T-cell (primary cell): ENCODE measurements at regions of chr4 and their contacts with region 1.

Region 1: DNA sequence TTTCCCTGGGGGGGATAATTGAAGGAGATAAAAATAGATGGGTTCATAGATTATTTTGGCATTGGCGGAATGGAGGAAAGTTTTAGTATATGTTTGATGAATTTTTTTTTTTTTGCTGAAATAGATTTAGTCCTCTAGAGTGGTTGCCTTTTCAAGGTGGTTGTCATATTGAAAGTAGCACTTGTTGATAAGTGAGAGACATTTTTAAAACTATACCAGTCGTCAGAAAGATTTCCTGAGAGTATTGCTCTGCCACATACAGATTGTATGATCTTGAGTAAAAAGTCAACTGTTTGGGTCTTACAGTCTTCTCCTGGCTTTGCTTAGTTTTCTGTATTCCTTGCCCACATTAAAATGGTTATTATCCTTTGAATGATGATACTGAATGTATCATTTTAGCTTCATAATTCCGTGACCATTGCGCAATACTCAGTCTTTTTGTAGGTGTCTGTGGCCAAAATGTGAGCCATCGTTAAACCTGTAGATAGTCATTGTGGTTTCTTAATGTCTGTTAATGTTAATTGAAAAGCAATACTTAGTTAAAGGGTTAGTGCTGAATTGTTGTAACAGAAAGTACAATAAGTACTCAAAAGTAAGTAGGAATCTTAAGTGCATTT is 7.1 kb downstream of the SMARCAD1 start:
- DNase-seq: no peak
- ATAC-seq: peak in 1 of 4 experiments; percentile 28
- H3K4me3 ChIP-seq: no peak overlapping the region
- H3K4me3 Mint-ChIP-seq: no peak overlapping the region
- H3K27ac ChIP-seq: no peak overlapping the region
- H3K27ac Mint-ChIP-seq: no peak overlapping the region
- H3K4me1 ChIP-seq: peaks cover 2 to 3% of the 10 kb centered on the region in 2 experiments
- H3K4me1 Mint-ChIP-seq: peaks cover 56 to 62% (median 57%) of the 10 kb centered on the region in 3 donors
- H3K27me3 ChIP-seq: no peaks in the 10 kb centered on the region
- H3K27me3 Mint-ChIP-seq: no peaks in the 10 kb centered on the region

Region 2: DNA sequence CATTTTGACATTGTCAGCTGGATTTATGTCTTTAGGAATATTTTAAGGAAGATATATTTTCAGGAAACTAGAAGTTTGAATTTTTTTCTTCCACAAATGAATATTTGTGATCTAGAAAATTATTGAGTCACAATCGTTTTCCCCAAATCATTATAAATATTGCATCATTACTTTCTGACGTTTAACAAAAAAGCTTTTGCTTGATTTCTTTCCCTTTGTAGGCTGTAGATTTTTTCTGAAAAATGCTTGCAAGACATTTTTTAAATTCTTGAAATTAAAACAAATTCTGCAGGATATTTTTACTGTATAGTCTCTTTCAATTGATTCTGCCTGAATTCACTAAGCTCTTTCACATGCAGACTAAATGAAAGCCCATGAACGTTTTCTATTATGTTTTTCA is 12.0 kb before region 1 on chr4:
- CTCF ChIA-PET with region 1: no interaction called
- POLR2A ChIA-PET with region 1: interaction called in 1 of 2 experiments, 12 read pairs
- DNase-seq: no peak
- ATAC-seq: no peak
- H3K4me3 ChIP-seq: no peak overlapping the region
- H3K4me3 Mint-ChIP-seq: no peak overlapping the region
- H3K27ac ChIP-seq: no peak overlapping the region
- H3K27ac Mint-ChIP-seq: no peak overlapping the region
- H3K4me1 ChIP-seq: peaks cover 3 to 4% of the 10 kb centered on the region in 2 experiments
- H3K4me1 Mint-ChIP-seq: peaks cover 4 to 13% (median 12%) of the 10 kb centered on the region in 3 donors
- H3K27me3 ChIP-seq: peaks cover 0 to 6% of the 10 kb centered on the region in 2 experiments
- H3K27me3 Mint-ChIP-seq: peaks cover 13 to 14% of the 10 kb centered on the region in 2 donors

Region 3: GRCh38 chr4:94403751-94404150 is 188.9 kb after region 1 on chr4:
- CTCF ChIA-PET with region 1: no interaction called
- POLR2A ChIA-PET with region 1: no interaction called
- DNase-seq: no peak
- ATAC-seq: no peak
- H3K4me3 ChIP-seq: no peak overlapping the region
- H3K4me3 Mint-ChIP-seq: no peak overlapping the region
- H3K27ac ChIP-seq: no peak overlapping the region
- H3K27ac Mint-ChIP-seq: no peak overlapping the region
- H3K4me1 ChIP-seq: no peaks in the 10 kb centered on the region
- H3K4me1 Mint-ChIP-seq: no peaks in the 10 kb centered on the region
- H3K27me3 ChIP-seq: no peaks in the 10 kb centered on the region
- H3K27me3 Mint-ChIP-seq: peaks cover 0 to 5% of the 10 kb centered on the region in 2 donors

Region 4: DNA sequence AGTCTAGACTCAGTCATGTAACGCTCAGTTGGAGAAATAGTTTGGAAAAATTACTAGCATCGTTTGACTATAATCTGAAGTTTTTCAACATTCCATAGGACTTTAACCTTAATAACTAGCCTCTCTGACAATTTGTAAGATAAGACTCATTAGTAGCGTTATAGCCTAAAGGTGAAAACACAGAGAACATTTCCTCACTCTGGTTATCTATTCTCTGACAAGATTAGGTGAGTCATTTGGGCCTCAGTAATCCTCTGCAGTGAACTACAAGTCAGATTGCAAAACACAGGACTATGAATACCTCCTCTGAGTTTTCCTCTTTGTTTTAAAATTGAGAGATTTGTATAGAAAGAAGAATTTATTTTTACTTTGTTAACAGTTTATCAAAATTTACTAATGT is 205.1 kb after region 1 on chr4:
- CTCF ChIA-PET with region 1: no interaction called
- POLR2A ChIA-PET with region 1: no interaction called
- DNase-seq: no peak
- ATAC-seq: no peak
- H3K4me3 ChIP-seq: no peak overlapping the region
- H3K4me3 Mint-ChIP-seq: no peak overlapping the region
- H3K27ac ChIP-seq: no peak overlapping the region
- H3K27ac Mint-ChIP-seq: no peak overlapping the region
- H3K4me1 ChIP-seq: no peaks in the 10 kb centered on the region
- H3K4me1 Mint-ChIP-seq: no peaks in the 10 kb centered on the region
- H3K27me3 ChIP-seq: no peaks in the 10 kb centered on the region
- H3K27me3 Mint-ChIP-seq: peaks cover 16 to 43% of the 10 kb centered on the region in 2 donors